ENCODE measurements at regions of chr7 and their contacts with region 1.

Region 1: DNA sequence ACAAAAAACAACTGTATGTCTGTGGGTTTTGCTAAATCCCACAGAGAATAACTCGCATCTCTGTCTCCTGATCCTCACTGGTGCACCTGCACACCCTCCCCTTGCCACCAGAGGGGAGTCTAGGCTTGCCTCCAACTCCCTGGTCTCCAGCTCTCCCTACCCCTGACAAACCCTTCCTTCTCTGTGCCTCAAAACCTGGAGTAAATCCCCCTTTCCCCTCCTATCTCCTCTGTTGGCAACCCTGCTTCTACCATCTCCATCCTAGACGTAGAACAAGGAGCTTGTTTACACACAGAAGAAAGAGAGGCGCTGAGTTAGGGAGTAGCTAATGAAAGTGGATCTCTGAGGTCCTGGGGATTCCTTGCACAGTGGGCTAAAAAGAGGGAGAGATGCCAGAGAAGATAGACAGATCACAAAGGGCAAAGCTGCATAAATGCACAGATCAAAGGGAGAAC is 6.0 kb downstream of the MBLAC1 start:
- DNase-seq: peak; percentile 82
- ATAC-seq: peak; percentile 81
- H3K4me3 Mint-ChIP-seq: no peak overlapping the region
- H3K27ac Mint-ChIP-seq: no peak overlapping the region
- H3K4me1 Mint-ChIP-seq: peaks cover 10% of the 10 kb centered on the region
- H3K27me3 Mint-ChIP-seq: no peaks in the 10 kb centered on the region

Region 2: GRCh38 chr7:99997545-99998137 is 135.1 kb before region 1 on chr7:
- CTCF ChIA-PET with region 1: interaction called, 5 read pairs
- POLR2A ChIA-PET with region 1: no interaction called
- intact Hi-C with region 1: loop called (anchors 1 to 5 kb)
- DNase-seq: peak; percentile 81
- ATAC-seq: peak; percentile 87
- H3K4me3 Mint-ChIP-seq: peak overlapping the region; percentile 67
- H3K27ac Mint-ChIP-seq: peak overlapping the region; percentile 89
- H3K4me1 Mint-ChIP-seq: peaks cover 15% of the 10 kb centered on the region
- H3K27me3 Mint-ChIP-seq: peaks cover 1% of the 10 kb centered on the region

Region 3: DNA sequence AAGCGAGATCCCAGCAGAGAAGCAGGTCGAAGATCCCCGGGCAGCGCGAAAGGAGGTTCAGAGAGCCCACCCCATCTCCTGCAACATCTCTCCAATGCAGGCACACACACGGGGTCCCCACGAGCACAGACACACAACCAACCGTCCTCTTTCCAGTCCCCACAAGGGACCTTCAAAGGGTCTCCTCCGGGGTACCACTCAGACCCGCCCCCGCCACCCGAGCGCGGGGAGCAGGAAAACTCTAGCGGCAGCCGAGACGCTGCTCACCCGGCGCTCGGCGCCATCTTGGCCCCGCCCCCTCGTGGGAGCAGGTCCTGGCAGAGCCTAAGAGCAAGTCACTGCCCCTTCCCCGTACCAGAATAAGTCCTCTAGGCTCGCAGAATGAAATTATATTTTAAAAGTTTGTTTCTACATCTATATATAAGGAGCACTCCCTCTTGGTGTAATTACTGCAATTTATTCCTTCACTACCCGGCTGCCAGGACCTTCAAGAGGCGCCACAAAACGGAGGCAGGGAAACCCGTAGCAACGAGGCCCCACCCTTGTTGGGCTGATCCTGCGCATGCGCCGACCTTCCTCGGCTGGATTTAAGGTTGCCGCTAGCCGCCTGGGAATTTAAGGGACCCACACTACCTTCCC is 13.5 kb before region 1 on chr7 and contains the starts of genes CNPY4 and TAF6:
- CTCF ChIA-PET with region 1: interaction called, 30 read pairs
- POLR2A ChIA-PET with region 1: interaction called, 4 read pairs
- intact Hi-C with region 1: loop called (anchors 1 kb)
- DNase-seq: peak; percentile 97
- ATAC-seq: peak; percentile 68
- H3K4me3 Mint-ChIP-seq: peak within 1 kb of the TSS; percentile 86
- H3K27ac Mint-ChIP-seq: peak within 1 kb of the TSS; percentile 94
- H3K4me1 Mint-ChIP-seq: peaks cover 19% of the 10 kb centered on the region
- H3K27me3 Mint-ChIP-seq: no peaks in the 10 kb centered on the region
- total RNA-seq, gene CNPY4: 11.0 to 14.0 TPM
- total RNA-seq, gene TAF6: 54.3 to 59.5 TPM

Region 4: GRCh38 chr7:100215895-100216294 is 83.2 kb after region 1 on chr7:
- CTCF ChIA-PET with region 1: interaction called, 20 read pairs
- POLR2A ChIA-PET with region 1: no interaction called
- intact Hi-C with region 1: loop called (anchors 1 to 5 kb)
- DNase-seq: no peak
- ATAC-seq: no peak
- H3K4me3 Mint-ChIP-seq: no peak overlapping the region
- H3K27ac Mint-ChIP-seq: peak overlapping the region; percentile 4
- H3K4me1 Mint-ChIP-seq: peaks cover 54% of the 10 kb centered on the region
- H3K27me3 Mint-ChIP-seq: no peaks in the 10 kb centered on the region

Region 5: DNA sequence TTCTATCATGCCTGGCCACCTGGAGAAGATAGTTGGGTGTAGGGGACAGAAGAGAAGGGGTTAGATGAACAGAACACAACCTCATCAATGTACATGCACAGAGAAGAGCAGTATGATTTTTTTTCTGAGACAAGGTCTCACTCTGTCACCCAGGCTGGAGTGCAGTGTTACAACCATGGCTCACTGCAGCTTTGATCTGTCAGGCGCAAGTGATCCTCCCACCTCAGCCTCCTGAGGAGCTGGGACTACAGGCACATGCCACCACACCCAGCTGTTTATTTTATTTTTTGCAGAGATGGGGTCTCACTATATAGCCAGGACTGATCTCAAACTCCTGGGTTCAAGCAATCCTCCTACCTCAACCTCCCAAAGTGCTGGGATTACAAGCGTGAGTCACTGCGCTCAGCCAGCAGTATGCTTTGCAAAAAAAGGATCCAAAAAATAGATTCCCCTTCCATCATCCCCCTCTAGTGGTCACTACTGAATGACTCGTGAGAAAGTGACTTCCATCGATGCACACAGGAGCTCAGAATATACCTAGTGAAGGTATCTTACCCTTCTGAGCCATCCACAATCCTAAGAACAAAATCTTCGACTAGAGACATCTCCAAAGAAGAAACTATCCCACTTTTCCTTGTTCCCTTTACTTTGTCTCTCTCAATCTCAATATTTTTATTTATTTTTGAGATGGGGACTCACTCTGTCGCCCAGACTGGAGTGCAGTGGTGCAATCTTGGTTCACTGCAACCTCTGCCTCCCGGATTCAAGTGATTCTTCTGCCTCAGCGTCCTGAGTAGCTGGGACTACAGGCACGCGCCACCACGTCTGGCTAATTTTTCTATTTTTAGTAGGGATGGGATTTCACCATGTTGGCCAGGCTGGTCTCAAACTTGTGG is 274.8 kb after region 1 on chr7:
- CTCF ChIA-PET with region 1: interaction called, 14 read pairs
- POLR2A ChIA-PET with region 1: no interaction called
- intact Hi-C with region 1: loop called (anchors 1 kb)
- DNase-seq: peak; percentile 55
- ATAC-seq: peak; percentile 94
- H3K4me3 Mint-ChIP-seq: no peak overlapping the region
- H3K27ac Mint-ChIP-seq: no peak overlapping the region
- H3K4me1 Mint-ChIP-seq: peaks cover 2% of the 10 kb centered on the region
- H3K27me3 Mint-ChIP-seq: no peaks in the 10 kb centered on the region

Region 6: DNA sequence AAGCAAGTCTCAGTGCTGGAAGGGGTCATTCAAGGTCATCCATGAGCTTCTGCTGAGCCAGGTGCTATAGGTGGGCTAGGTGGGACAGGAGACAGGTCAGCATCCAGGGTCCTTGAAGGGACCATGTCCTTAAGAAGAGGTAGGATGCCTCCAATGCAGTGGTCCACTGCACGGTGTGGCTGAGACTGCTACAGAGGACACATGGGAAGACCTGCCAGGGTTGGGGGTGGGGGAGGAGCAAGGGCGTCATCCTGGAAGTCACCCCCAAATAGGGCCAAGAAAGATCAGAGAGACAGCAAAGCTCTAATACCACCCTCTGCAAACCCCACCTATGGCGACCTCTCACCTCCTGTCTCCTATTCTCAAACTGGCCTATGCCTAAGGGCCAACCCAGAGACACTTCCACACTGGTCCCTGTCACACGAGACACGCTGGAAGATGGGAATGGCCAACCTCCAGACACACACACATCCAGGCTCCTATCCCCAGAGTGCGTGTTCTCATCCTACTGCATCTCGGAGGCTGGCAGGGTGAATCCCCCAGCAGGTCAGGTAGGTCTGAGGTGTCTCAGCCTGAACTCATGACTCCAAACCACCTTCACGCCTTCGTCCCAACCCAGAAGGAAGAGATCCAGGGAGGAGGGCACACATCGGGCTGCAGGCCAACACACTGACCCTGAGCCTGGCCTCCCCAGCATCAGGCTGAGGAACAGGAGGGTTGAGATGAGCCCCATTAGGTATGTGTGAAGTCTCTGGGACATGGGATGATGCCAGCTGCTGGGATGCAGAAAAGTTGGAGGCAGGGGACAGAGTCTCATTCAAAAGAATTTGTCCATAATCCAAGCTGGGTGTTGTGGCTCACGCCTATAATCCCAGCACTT is 309.2 kb after region 1 on chr7:
- CTCF ChIA-PET with region 1: no interaction called
- POLR2A ChIA-PET with region 1: no interaction called
- intact Hi-C with region 1: no loop called
- DNase-seq: no peak
- ATAC-seq: no peak
- H3K4me3 Mint-ChIP-seq: no peak overlapping the region
- H3K27ac Mint-ChIP-seq: no peak overlapping the region
- H3K4me1 Mint-ChIP-seq: peaks cover 11% of the 10 kb centered on the region
- H3K27me3 Mint-ChIP-seq: no peaks in the 10 kb centered on the region